ENCODE measurements at regions of chr11 and their contacts with region 1.

Region 1: DNA sequence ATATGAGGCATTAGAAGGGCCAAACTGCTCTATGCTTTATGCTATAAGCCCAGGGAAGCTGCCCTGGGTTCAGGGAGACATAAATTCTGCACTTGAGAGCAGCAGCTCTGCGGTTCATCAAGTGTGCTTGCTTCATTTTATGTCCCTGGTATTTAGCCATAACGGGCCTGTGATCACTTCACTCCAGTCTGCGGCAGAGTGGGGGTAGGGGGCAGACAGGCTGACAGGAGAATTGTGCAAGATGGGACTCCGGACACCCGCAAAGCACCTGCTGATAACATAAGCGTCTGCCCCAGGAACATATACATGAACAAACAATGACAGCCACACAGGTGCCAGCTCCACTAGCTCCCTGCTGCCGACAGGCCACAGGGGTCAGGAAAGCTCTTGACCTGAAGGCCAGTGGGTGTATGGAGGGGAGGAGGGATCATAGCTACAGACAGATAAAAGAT is 56.1 kb downstream of the SMCO4 start:
- DNase-seq: no peak
- H3K4me3 ChIP-seq: no peak overlapping the region
- H3K27ac ChIP-seq: no peak overlapping the region
- H3K4me1 ChIP-seq: no peaks in the 10 kb centered on the region
- H3K27me3 ChIP-seq: no peaks in the 10 kb centered on the region
- CTCF ChIP-seq: no peak

Region 2: GRCh38 chr11:92464822-92465221 is 1022.2 kb before region 1 on chr11:
- intact Hi-C with region 1: no loop called
- DNase-seq: no peak
- H3K4me3 ChIP-seq: no peak overlapping the region
- H3K27ac ChIP-seq: no peak overlapping the region
- H3K4me1 ChIP-seq: no peaks in the 10 kb centered on the region
- H3K27me3 ChIP-seq: no peaks in the 10 kb centered on the region
- CTCF ChIP-seq: no peak

Region 3: DNA sequence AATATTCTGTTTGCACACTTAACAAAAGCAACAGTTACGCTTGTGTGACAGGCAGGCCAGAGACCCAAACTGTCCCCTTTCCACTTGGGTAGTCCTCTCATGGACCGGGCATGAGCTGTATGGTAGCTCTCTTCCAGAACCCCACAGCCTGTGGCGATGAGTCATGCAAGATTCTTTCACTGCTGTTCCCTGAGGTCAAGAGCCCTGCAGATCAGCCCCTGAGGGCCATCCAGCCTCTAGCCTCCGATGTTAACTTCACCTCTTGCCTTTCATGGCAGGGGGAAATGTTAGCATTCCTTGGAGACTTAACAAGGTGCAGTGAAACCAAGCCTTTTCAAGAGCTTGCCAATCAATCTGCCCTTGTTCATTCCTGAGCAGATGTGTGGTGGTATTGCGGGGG is 219.7 kb before region 1 on chr11:
- intact Hi-C with region 1: no loop called
- DNase-seq: no peak
- H3K4me3 ChIP-seq: no peak overlapping the region
- H3K27ac ChIP-seq: no peak overlapping the region
- H3K4me1 ChIP-seq: no peaks in the 10 kb centered on the region
- H3K27me3 ChIP-seq: no peaks in the 10 kb centered on the region
- CTCF ChIP-seq: no peak

Region 4: GRCh38 chr11:93623179-93623578 is 136.1 kb after region 1 on chr11:
- intact Hi-C with region 1: loop called (anchors 10 kb)
- DNase-seq: no peak
- H3K4me3 ChIP-seq: no peak overlapping the region
- H3K27ac ChIP-seq: no peak overlapping the region
- H3K4me1 ChIP-seq: no peaks in the 10 kb centered on the region
- H3K27me3 ChIP-seq: no peaks in the 10 kb centered on the region
- CTCF ChIP-seq: no peak

Region 5: GRCh38 chr11:94049351-94049750 is 562.3 kb after region 1 on chr11:
- intact Hi-C with region 1: no loop called
- DNase-seq: no peak
- H3K4me3 ChIP-seq: no peak overlapping the region
- H3K27ac ChIP-seq: no peak overlapping the region
- H3K4me1 ChIP-seq: no peaks in the 10 kb centered on the region
- H3K27me3 ChIP-seq: no peaks in the 10 kb centered on the region
- CTCF ChIP-seq: no peak

Measured in ascending aorta (tissue), 2 donors.